ENCODE measurements at regions of chr13 and their contacts with region 1.

Region 1: DNA sequence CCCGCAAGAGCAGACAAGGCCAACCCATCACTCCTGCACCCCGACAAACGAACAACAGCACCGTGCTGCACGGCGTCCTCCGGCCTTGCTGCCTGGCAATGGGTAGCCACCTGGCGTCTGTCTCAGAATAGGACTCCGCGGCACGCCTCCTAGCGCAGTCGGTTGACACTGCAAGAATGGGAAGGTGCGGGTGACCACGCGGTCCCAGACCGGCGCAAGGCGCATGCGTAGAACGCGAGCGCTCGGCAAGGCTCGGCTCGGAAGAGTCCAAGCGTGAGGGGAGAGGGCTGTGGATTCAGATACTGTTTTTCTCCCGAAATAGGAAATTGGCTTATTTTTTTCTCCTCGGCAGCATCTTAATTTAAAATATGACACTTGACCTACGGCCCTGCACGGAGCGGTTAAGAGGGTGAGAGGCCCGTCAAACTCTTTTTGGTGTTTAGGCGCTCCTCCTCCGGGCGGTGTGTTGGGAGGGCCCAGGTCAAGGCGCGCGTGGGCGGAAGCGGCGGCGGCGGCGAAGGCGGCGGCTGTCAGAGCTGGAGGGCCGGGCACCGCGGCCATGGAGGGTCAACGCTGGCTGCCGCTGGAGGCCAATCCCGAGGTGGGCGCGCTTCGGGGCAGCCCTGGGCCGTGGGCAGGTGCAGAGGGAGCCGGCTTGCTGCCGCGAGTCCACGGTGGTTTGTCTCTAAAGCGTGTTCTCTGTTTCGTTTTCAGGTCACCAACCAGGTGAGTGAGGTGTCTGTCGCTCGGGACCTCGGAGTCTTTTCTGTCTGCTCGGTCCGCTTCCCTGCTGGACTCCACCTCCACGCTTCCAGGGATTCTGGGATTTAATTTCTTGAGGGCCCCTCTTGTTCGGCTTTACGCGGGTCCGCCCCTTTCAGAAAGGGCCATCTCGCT is at the start of gene UCHL3:
- DNase-seq: peak; percentile 96 to 99 (median 98)
- ATAC-seq: peak; percentile 96
- H3K4me3 ChIP-seq: peak within 1 kb of the TSS; percentile 67 to 80
- H3K27ac ChIP-seq: peak within 1 kb of the TSS; percentile 85 to 86
- H3K4me1 ChIP-seq: peaks cover 6 to 17% of the 10 kb centered on the region in 2 donors
- H3K27me3 ChIP-seq: no peaks in the 10 kb centered on the region
- CTCF ChIP-seq: peak; percentile 67 to 89
- polyA plus RNA-seq, gene UCHL3: 20.5 to 23.2 (median 22.1) TPM

Region 2: DNA sequence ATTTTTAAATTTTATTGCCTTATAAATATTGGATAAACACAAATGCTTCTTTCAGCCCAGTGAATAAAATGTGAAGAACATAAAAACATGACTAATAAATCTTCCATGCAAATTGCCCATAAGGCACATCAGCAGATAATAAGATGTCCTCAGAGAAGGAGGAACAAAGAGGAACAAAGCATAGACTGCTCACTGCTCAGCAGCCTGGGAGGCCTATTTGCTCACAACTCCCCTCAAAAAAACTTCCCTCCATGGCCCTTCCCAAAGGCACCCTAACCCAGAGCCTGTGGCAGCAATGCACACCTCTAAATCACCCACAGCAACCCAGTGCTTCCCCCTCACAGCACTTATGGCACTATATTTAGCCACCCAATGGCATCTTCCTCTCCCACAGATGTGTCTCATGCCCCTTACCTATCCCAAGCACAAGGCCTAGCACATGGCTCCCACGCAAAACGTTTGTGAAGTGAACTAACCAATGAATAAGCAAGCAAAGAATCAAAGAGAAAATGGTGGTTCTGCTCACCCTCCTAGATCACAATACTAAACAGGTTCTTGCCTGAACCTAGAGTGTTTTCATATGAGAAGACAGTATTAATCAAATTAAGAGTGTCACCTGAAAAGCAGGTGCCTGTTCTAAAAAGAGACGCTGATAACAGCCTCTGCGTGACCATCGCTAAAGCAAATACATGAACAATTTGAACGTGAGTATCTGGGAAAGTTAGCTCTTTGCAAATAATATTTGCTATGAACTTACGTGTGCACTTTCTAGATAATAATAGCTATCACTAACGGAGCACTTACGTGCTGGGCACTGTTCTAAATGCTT is 164.4 kb before region 1 on chr13:
- intact Hi-C with region 1: loop called in 1 of 2 experiments (anchors 10 kb)
- DNase-seq: no peak
- ATAC-seq: peak; percentile 56
- H3K4me3 ChIP-seq: no peak overlapping the region
- H3K27ac ChIP-seq: no peak overlapping the region
- H3K4me1 ChIP-seq: no peaks in the 10 kb centered on the region
- H3K27me3 ChIP-seq: no peaks in the 10 kb centered on the region
- CTCF ChIP-seq: no peak